ENCODE measurements at regions of chr6 and their contacts with region 1.

Region 1: GRCh38 chr6:36985808-36986703 is at the start of gene MTCH1:
- DNase-seq: peak; percentile 97
- ATAC-seq: peak; percentile 89
- H3K4me3 Mint-ChIP-seq: peak within 1 kb of the TSS; percentile 97
- H3K27ac Mint-ChIP-seq: peak within 1 kb of the TSS; percentile 97
- H3K4me1 Mint-ChIP-seq: peaks cover 17% of the 10 kb centered on the region
- H3K27me3 Mint-ChIP-seq: peaks cover 9% of the 10 kb centered on the region
- total RNA-seq, gene MTCH1: 135 to 139 TPM

Region 2: DNA sequence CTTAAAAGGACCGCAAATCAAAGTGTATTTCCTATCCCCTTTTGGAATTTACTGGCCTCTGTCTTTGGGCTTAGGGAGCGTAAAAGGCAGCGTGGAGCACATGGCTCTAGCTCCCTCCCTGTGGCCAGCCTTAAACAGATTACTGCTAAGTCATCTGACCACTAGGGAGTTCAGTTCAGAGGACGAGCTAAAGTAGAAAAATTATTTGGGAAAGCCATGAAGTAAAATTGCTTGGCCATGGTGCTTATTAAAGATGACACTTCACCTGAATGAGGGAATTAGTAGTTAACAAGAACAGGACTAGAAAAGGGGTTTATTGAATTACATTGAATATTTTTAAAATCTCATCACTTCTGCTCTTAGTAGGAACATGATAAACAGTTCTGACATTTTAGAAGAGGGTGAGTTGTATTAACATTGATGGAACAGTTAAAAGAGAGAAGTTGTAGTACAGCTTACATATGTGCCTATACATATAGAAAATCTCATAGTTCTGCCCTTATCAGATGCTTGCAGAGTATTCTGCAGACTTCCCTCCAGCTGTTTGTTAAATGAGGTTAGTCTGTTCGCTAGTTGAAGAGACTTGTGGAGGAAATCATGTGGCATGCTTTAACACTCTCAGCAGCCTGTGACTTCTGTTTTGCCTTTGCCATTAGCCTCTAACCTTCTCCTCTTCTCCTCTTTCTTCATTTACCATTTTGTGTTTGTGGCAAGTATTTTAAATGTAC is 887.0 kb before region 1 on chr6:
- POLR2A ChIA-PET with region 1: no interaction called
- DNase-seq: no peak
- ATAC-seq: peak; percentile 32
- H3K4me3 Mint-ChIP-seq: peak overlapping the region; percentile 28
- H3K27ac Mint-ChIP-seq: peak overlapping the region; percentile 31
- H3K4me1 Mint-ChIP-seq: peaks cover 24% of the 10 kb centered on the region
- H3K27me3 Mint-ChIP-seq: no peaks in the 10 kb centered on the region

Region 3: DNA sequence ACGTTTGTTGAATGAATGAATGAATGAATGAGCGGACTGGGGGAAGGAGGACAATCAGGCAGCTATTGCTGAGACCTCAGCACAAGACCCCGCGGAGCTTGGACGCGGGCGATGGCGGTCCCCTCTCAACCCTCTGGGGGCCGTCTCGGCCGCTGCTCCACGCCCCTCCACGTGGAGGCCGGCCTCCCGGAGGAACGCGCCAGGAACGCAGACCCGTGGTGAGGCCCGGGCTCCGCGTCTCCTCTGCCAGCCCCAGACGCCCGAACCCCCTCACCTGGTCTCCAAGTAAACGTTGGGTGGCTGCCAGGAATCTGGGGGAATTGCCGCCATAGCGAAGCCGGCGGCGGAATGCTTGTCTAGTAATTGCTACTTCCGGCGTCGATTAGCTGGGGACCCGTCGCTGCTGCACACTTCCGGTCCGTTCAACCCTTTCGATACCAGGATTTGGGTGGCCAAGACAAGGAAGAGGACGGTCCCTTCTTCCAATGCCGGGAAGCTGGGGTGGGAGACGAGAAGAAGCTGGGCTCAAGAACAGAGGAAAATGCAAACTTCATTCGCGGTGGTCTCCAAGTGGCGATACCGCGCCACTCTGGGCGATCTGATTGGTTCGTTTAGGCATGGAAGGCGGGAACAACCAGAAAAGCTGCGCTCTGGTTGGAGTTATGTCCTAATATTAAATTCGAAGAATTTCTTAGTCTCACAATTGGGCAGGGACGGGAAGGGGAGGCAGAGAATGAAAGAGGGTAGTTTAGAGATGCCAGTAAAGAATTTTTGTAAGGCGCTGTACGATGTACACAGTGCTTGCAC is 111.4 kb before region 1 on chr6 and contains the start of gene PPIL1:
- POLR2A ChIA-PET with region 1: interaction called, 17 read pairs
- DNase-seq: peak; percentile 87
- ATAC-seq: peak; percentile 91
- H3K4me3 Mint-ChIP-seq: peak within 1 kb of the TSS; percentile 97
- H3K27ac Mint-ChIP-seq: peak within 1 kb of the TSS; percentile 98
- H3K4me1 Mint-ChIP-seq: peaks cover 28% of the 10 kb centered on the region
- H3K27me3 Mint-ChIP-seq: peaks cover 3% of the 10 kb centered on the region
- total RNA-seq, gene PPIL1: 18.5 to 19.9 TPM

Region 4: GRCh38 chr6:36885461-36886401 is 100.3 kb before region 1 on chr6 and contains the start of gene C6orf89:
- POLR2A ChIA-PET with region 1: interaction called, 14 read pairs
- DNase-seq: peak; percentile 92
- ATAC-seq: peak; percentile 99
- H3K4me3 Mint-ChIP-seq: peak within 1 kb of the TSS; percentile 91
- H3K27ac Mint-ChIP-seq: peak within 1 kb of the TSS; percentile 88
- H3K4me1 Mint-ChIP-seq: peaks cover 24% of the 10 kb centered on the region
- H3K27me3 Mint-ChIP-seq: no peaks in the 10 kb centered on the region
- total RNA-seq, gene C6orf89: 45.3 to 46.0 TPM

Region 5: GRCh38 chr6:36954262-36954931 is 31.7 kb before region 1 on chr6 and contains the start of gene PI16:
- POLR2A ChIA-PET with region 1: interaction called, 10 read pairs
- DNase-seq: no peak
- ATAC-seq: peak; percentile 51
- H3K4me3 Mint-ChIP-seq: peak within 1 kb of the TSS; percentile 21
- H3K27ac Mint-ChIP-seq: no peak within 1 kb of the TSS
- H3K4me1 Mint-ChIP-seq: peaks cover 40% of the 10 kb centered on the region
- H3K27me3 Mint-ChIP-seq: peaks cover 14% of the 10 kb centered on the region
- total RNA-seq, gene PI16: 0.37 to 0.86 TPM

Region 6: GRCh38 chr6:36962874-36963273 is 23.2 kb before region 1 on chr6:
- POLR2A ChIA-PET with region 1: interaction called, 10 read pairs
- DNase-seq: peak; percentile 79
- ATAC-seq: peak; percentile 64
- H3K4me3 Mint-ChIP-seq: peak overlapping the region; percentile 43
- H3K27ac Mint-ChIP-seq: peak overlapping the region; percentile 74
- H3K4me1 Mint-ChIP-seq: peaks cover 38% of the 10 kb centered on the region
- H3K27me3 Mint-ChIP-seq: no peaks in the 10 kb centered on the region

Region 7: DNA sequence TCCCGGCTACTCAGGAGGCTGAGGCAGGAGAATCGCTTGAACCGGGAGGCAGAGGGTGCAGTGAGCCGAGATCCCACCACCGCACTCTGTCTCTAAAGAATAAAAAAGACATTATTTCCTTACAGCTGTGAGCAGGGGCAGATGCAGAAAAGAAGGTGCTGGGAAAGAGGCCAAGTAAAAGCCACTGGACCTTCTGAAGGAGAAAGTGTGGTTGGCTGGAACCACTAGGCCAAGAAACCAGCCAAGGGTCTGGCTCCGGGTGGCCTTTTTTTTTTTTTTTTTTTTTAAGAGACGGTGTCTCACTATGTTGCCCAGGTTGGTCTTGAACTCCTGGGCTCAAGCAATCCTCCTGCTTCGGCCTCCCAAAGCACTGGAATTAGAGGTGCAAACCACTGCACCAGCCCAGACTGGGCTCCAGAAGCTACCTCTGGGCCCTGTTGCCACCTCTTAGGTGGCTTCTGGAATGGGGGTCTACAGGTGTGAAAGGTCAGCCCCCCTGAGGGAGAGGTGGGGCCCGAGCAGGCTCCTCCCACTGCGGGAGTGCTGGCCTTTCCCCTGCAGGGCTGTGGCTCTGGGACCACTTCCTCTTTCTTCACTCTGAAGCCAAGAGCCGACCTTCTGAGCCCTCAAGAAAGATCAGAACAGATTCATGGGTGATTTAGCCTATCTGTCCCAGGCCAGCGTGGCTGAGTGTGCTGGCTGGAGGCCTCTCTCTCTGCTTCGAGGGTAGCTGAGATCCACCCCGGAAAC is 19.2 kb after region 1 on chr6 and contains the start of gene FGD2:
- POLR2A ChIA-PET with region 1: interaction called, 15 read pairs
- DNase-seq: no peak
- ATAC-seq: peak; percentile 46
- H3K4me3 Mint-ChIP-seq: peak within 1 kb of the TSS; percentile 81
- H3K27ac Mint-ChIP-seq: peak within 1 kb of the TSS; percentile 80
- H3K4me1 Mint-ChIP-seq: peaks cover 23% of the 10 kb centered on the region
- H3K27me3 Mint-ChIP-seq: no peaks in the 10 kb centered on the region
- total RNA-seq, gene FGD2: 9.8 to 12.4 TPM

Region 8: DNA sequence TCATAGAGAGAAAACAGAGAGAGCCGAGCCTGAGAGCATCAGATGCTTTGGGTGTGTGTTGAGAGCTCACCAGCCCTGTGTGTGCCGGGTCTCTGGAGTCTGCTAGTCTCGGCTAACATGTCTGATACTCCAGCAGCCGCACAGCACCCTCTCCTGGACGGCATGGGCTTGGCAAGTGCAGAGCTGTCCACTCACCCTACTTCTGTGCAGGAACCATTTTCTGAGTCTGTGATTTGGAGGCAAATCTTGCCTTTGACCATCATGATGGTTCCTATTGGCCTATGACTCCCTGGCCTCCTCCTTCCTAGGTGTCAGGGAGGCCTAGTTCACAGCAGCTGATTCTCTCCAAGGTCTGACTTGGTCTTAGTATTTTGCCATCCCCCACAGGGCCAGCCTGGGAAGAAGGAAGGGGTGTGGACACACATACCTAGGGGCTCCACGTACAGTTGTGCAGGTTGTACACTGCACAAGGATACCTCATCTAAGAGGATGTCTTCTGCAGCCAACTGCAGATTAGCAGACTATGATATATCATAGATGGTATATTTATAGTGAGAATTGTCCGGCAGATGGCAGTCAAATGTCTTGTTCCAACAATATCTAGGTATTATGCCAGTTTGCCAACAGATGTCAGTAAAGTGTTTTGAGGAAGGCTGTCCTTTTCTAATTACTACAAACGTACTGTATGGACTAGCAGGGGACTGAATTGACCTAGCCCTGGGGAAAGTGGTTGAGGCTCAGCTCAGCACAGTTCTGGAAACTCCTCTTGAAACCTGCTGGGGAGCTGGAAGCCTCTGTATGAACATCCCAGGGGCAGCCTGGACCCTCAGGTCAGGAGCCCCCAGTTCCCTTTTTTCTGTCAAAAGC is 32.4 kb after region 1 on chr6:
- POLR2A ChIA-PET with region 1: interaction called, 15 read pairs
- DNase-seq: peak; percentile 90
- ATAC-seq: peak; percentile 94
- H3K4me3 Mint-ChIP-seq: peak overlapping the region; percentile 31
- H3K27ac Mint-ChIP-seq: peak overlapping the region; percentile 70
- H3K4me1 Mint-ChIP-seq: peaks cover 51% of the 10 kb centered on the region
- H3K27me3 Mint-ChIP-seq: no peaks in the 10 kb centered on the region